Upper lobe of right lung (tissue), 1 donor: ENCODE measurements at regions of chr6 and their contacts with region 1.

Region 1: GRCh38 chr6:18491308-18492045 is 104.3 kb downstream of the RNF144B start:
- DNase-seq: no peak
- ATAC-seq: no peak
- H3K4me3 ChIP-seq: no peak overlapping the region
- H3K27ac ChIP-seq: no peak overlapping the region
- H3K4me1 ChIP-seq: peaks cover 4% of the 10 kb centered on the region
- H3K27me3 ChIP-seq: no peaks in the 10 kb centered on the region
- CTCF ChIP-seq: no peak

Region 2: GRCh38 chr6:18323935-18324705 is 167.4 kb before region 1 on chr6:
- intact Hi-C with region 1: loop called (anchors 10 kb)
- DNase-seq: no peak
- ATAC-seq: peak; percentile 84
- H3K4me3 ChIP-seq: no peak overlapping the region
- H3K27ac ChIP-seq: no peak overlapping the region
- H3K4me1 ChIP-seq: no peaks in the 10 kb centered on the region
- H3K27me3 ChIP-seq: no peaks in the 10 kb centered on the region
- CTCF ChIP-seq: peak; percentile 81

Region 3: GRCh38 chr6:18536663-18537062 is 45.2 kb after region 1 on chr6:
- intact Hi-C with region 1: no loop called
- DNase-seq: no peak
- ATAC-seq: no peak
- H3K4me3 ChIP-seq: no peak overlapping the region
- H3K27ac ChIP-seq: no peak overlapping the region
- H3K4me1 ChIP-seq: no peaks in the 10 kb centered on the region
- H3K27me3 ChIP-seq: no peaks in the 10 kb centered on the region
- CTCF ChIP-seq: no peak